Heart left ventricle (tissue), 16 donors: ENCODE measurements at regions of chr22 and their contacts with region 1.

Region 1: GRCh38 chr22:29780748-29781676 is 13.8 kb downstream of the UQCR10 start:
- DNase-seq: peak in 1 of 5 donors; percentile 49
- ATAC-seq: peak; percentile 12 to 47 (median 26)
- H3K4me3 ChIP-seq: no peak overlapping the region
- H3K27ac ChIP-seq: peak overlapping the region; percentile 55 to 89 (median 76)
- H3K4me1 ChIP-seq: peaks cover 0 to 53% (median 32%) of the 10 kb centered on the region in 12 donors
- H3K27me3 ChIP-seq: no peaks in the 10 kb centered on the region
- CTCF ChIP-seq: no peak
- POLR2A ChIP-seq: no peak

Region 2: GRCh38 chr22:29816128-29816527 is 35.1 kb after region 1 on chr22:
- intact Hi-C with region 1: loop called in 1 of 10 experiments (anchors 5 kb)
- DNase-seq: peak; percentile 48 to 88 (median 81)
- ATAC-seq: peak; percentile 77 to 84 (median 82)
- H3K4me3 ChIP-seq: no peak overlapping the region
- H3K27ac ChIP-seq: peak overlapping the region in 8 of 12 donors; percentile 34 to 73 (median 54)
- H3K4me1 ChIP-seq: peaks cover 0 to 36% (median 25%) of the 10 kb centered on the region in 12 donors
- H3K27me3 ChIP-seq: no peaks in the 10 kb centered on the region
- CTCF ChIP-seq: no peak
- POLR2A ChIP-seq: no peak

Region 3: DNA sequence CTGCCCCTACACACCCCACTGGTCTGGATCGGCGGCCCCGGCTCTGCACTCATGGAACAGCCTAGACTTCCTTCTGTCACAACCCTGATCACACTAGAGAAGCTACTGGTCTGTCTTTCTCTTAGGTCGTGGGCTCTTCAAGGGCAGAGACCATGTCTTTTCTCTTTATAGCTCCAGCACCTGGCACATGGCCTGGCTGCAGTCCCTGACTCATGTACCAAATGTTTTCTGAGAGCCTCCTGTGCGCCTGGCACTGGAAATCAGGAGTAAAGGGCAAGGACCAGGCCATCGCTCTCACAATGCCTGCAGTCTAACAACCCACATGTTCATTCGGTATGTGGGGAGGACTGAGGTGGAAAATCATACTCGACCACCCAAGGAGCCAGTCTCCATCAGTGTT is 49.6 kb after region 1 on chr22:
- intact Hi-C with region 1: loop called in 2 of 10 experiments (anchors 5 kb)
- DNase-seq: peak; percentile 64 to 88 (median 70)
- ATAC-seq: peak; percentile 84 to 88 (median 86)
- H3K4me3 ChIP-seq: no peak overlapping the region
- H3K27ac ChIP-seq: peak overlapping the region; percentile 16 to 88 (median 74)
- H3K4me1 ChIP-seq: peaks cover 0 to 56% (median 25%) of the 10 kb centered on the region in 12 donors
- H3K27me3 ChIP-seq: no peaks in the 10 kb centered on the region
- CTCF ChIP-seq: no peak
- POLR2A ChIP-seq: no peak